ENCODE measurements at regions of chr6 and their contacts with region 1.

Region 1: GRCh38 chr6:33771146-33772081 is 17.5 kb downstream of the LEMD2 start:
- DNase-seq: peak; percentile 93
- H3K4me3 ChIP-seq: peak overlapping the region; percentile 27
- H3K27ac ChIP-seq: peak overlapping the region; percentile 98
- H3K27me3 ChIP-seq: no peaks in the 10 kb centered on the region
- CTCF ChIP-seq: peak; percentile 82

Region 2: DNA sequence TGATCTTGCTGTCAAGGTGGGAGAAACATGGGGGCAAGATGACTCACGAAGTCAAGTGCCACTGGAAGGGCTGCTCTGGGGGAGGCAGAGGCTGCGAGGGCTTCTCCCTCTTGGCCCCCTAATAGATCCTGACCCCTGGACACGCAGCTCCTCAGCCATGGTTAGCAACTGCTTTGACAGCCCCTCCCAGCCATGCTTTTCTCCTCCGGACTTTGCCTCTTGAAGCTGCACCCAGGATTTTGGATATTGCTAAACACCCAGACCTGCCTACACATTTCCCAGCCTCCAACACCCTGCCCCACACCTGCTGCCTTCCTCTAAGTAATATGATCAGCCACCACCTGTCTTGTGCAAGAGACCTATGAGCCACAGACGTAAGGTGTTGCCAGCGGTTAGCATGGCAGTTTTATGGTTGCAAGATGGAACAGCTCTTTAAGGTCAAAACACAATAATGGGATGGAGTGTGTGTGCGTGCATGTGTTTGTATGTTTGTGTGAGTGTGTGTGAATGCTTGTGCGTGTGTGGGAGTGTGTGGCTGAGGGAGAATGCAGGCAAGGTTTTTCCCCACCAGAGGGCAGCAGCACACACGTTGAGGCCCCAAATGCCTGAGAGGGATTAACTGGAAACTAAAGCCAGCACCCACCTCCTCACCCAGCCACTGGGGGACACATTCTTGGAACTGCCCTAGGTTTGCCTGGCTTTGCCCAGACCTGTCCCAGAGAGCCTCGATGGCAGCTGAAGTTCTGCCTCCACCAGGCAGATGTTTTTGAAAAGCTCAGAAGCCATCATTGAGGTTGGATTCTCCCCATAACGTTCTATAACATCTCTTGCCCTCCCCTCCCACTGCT is 27.2 kb before region 1 on chr6:
- CTCF ChIA-PET with region 1: interaction called, 57 read pairs
- POLR2A ChIA-PET with region 1: interaction called, 9 read pairs
- DNase-seq: no peak
- H3K4me3 ChIP-seq: no peak overlapping the region
- H3K27ac ChIP-seq: no peak overlapping the region
- H3K27me3 ChIP-seq: peaks cover 22% of the 10 kb centered on the region
- CTCF ChIP-seq: peak; percentile 96

Region 3: DNA sequence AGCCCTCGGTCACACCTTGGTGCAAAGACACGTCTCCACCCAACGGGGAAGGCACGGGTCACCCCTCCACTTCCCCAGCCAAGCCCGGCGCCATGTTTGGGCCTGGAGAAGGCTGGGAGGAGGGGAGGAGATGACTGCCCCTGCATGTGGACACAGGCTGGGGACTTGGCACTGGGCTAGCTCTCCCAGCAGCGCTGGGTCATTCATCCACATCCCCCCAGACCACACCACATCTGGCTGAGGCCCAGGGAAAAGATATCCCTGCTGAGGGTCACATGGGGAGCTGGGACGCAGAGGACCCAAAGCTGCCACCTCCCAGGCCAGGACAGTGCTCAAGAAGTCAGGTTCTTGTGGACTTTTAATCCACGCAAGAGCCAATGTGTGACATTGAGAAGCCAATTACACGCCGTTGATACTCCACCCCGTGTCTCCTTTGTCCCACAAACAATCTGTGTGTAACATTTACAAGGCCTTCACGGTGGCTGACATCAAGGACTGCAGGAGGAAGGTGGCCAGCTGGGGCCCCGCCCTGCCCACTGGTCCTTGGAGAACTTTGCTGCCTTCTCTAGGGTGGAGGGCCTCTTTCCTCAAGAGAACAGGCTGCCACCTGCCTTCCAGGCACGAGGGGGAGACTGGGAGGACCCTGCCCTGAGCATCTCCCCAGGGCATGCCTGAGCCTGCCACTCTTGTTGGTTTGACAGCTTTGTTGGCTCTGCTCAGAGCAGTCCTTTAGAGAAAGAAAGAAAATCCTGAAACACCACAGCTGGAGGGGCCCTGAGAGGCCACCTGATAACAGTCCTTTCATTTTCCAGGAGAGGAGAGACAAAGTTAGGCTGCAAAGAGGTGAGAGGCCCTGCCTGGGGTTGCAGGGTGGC is 19.4 kb before region 1 on chr6:
- CTCF ChIA-PET with region 1: interaction called, 57 read pairs
- POLR2A ChIA-PET with region 1: interaction called, 15 read pairs
- DNase-seq: no peak
- H3K4me3 ChIP-seq: no peak overlapping the region
- H3K27ac ChIP-seq: no peak overlapping the region
- H3K27me3 ChIP-seq: peaks cover 8% of the 10 kb centered on the region
- CTCF ChIP-seq: no peak

Region 4: DNA sequence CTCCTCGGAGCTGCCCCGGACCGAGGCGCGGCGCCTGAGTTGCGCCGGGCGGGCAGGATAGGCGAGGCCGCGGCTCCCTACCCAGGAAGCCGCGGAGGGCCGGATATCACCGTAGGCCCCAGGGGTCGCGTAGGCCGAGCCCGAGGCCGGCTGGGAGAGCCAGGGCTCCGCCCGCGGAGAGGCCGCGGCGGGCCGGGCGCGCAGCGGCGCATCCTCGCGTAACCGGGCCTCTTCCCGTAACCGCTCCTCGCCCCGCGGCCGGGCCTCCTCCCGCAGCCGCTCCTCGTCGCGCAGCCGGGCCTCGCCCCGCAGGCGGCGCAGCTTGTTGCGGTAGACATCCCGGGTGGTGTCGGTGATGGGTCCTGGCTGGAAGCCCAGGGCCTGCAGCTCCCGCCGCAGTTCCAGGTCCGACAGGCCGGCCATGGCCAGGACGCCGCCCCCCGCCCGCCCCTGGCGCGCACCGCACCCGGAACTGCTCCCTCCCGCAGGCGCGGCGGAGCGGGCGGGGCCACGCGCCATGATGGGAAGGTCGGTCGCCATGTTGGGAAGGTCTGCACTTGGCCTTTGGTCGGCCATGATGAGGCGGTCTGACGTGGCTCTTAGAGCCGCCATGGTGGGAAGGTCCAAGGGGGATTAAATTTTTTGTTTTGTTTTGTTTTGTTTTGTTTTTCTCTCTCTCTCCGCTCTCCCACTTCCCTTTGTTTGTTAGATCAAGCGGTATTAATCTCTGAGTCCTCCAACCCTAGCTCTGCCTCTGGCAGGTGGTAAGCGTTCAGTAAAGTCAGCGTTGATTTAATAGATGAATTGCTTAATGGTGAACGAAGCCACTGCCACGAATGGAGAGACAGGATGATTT is 17.5 kb after region 1 on chr6 and contains the start of gene LEMD2:
- CTCF ChIA-PET with region 1: interaction called, 31 read pairs
- POLR2A ChIA-PET with region 1: interaction called, 12 read pairs
- DNase-seq: peak; percentile 84
- H3K4me3 ChIP-seq: peak within 1 kb of the TSS; percentile 69
- H3K27ac ChIP-seq: peak within 1 kb of the TSS; percentile 89
- H3K27me3 ChIP-seq: peaks cover 9% of the 10 kb centered on the region
- CTCF ChIP-seq: no peak
- polyA plus RNA-seq, gene LEMD2: 47.4 and 53.9 TPM in 2 replicates

Region 5: DNA sequence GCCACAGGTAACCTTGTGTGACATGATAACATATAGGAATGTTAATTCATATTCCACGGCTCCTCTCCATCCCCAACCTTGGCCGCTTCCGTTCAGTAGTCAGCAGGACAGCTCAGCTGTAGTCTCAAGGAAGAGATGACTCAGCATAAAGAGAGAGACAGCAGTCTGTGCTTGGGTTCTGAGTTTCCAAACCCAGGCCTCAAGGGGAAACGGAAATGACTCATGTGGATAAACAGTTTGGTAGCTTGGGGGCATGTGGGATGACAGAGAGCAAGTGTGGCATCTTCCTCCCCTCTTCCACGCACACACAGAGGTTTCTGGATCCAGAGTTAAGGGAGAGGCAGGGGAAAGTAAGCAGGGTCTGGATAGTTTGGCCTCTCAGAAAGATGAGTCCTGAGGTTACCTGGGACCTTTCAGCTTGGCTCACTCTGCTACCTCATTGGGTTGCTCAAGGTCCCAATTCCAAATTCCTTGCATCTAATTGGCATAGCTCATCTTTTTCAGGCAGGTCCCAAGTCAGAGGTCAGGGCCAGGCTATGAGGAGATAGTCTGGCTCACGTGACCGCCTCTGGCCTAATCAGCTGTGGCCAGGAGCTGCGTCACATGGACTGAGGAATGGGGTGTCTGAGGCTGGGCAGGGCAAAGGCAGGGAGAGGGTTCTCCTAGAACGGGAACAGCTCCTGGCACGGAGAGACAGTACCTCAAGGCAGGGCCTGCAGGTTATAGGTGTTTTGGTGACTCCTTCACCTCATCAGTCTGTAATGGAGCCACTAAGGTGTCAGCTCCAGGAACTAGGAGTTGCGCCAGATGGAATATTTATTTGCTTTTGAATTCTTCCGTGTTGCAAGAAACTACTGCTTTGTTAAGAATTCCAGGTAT is 68.9 kb after region 1 on chr6:
- CTCF ChIA-PET with region 1: interaction called, 5 read pairs
- POLR2A ChIA-PET with region 1: interaction called, 14 read pairs
- DNase-seq: peak; percentile 85
- H3K4me3 ChIP-seq: no peak overlapping the region
- H3K27ac ChIP-seq: peak overlapping the region; percentile 97
- H3K27me3 ChIP-seq: no peaks in the 10 kb centered on the region
- CTCF ChIP-seq: no peak

Region 6: DNA sequence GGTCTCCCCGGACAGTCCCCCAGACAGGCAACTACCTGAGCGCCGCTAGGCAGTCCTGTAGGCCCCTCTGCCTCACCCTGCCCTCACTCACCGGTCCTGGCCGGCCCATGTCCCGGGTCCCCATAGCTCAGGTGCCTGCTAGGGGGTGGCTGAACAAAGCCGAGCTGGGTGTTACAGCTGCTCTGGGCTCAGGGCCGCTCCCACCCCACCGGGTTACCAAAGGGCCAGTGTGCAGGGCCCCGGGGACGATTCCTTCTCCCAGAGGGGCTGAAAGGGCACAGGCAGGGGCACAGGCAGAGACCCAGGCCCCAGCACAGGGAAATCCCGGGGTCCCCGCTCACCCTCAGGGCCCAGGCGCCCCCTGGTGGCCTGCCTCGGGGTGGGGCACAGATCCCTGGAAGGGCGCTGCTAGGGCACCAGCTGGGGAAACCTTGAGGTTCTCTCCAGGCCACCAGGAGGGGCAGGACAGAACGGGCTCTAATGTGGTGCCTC is 256.1 kb after region 1 on chr6:
- CTCF ChIA-PET with region 1: interaction called, 18 read pairs
- POLR2A ChIA-PET with region 1: interaction called, 7 read pairs
- DNase-seq: no peak
- H3K4me3 ChIP-seq: no peak overlapping the region
- H3K27ac ChIP-seq: no peak overlapping the region
- H3K27me3 ChIP-seq: peaks cover 33% of the 10 kb centered on the region
- CTCF ChIP-seq: peak; percentile 75

Region 7: DNA sequence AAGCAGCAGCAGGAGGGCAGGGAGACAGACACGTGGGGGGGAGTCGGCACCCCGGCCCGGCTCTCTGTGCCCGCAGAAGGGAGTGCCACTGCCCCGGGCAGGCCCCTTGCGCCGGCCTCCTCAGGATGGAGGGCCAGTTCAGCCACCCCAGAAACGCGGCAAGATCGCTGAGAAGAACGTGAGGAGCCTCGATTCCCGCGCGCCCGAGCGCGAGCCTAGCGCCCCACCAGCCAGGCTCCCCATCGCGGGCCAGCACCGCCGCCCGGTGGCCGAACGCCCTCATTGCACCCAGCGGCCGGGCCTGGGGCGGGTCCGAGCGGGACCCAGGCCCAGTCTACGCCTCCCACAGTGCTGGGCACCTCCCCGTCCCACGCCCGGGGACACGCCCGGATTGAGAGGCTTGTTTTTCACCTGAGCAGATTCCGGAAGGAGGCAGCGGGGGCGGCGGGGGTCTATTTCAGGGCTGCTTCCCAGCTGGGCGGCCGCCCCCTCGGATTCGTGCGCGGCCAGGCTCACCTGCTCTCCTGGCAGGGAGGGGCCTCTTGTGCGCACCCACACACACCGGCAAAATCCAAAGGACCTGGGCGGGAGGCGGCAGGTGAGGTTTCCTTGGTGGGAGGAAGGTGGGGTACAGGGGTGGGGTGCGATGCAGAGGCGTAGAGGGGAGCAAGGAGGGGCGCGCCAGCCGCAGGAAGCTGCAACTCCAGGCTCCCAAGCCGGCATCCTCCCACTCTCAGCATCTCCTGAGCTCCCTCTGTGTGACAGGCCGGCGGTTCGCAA is 383.4 kb after region 1 on chr6:
- CTCF ChIA-PET with region 1: interaction called, 21 read pairs
- POLR2A ChIA-PET with region 1: no interaction called
- DNase-seq: no peak
- H3K4me3 ChIP-seq: peak overlapping the region; percentile 42
- H3K27ac ChIP-seq: no peak overlapping the region
- H3K27me3 ChIP-seq: peaks cover 49% of the 10 kb centered on the region
- CTCF ChIP-seq: peak; percentile 89